ENCODE measurements at regions of chr10 and their contacts with region 1.

Region 1: GRCh38 chr10:26437637-26438461 is at the start of gene APBB1IP:
- DNase-seq: peak; percentile 94
- H3K4me3 ChIP-seq: peak within 1 kb of the TSS; percentile 93
- H3K27ac ChIP-seq: peak within 1 kb of the TSS; percentile 92
- H3K4me1 ChIP-seq: peaks cover 42% of the 10 kb centered on the region
- CTCF ChIP-seq: no peak
- total RNA-seq, gene APBB1IP: 58.1 and 65.8 TPM in 2 replicates

Region 2: DNA sequence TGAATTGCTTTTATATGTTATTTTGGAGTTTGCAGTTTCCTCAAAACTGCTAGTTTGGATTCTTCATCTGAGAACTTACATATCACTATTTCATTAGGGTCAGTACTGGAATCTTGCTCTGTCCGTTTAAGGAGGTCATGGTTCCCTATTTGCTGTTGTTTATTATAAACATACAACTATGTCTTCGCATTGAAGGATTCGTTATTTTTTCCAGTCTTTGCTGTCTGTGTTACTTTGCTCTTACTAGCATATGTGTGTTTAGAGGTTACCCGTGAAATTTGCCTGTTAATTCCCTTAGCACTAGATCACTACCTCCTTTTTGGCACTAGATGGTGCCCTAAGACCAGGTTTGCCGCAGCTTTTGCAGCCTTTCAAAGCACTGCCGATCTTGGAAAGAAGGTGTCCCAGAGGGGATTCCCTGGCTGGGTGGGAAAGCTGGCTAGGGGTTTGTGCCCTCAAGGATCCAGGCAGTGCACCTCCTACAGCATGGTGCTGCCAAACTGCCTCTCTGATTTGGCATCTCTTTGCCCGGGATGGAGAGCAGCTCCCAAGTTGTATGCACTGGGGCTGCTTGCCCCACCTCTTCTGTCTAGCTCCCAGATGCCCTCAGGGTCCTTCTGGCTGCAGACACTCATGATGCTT is 102.8 kb before region 1 on chr10:
- CTCF ChIA-PET with region 1: no interaction called
- POLR2A ChIA-PET with region 1: interaction called, 3 read pairs
- intact Hi-C with region 1: loop called (anchors 1 kb)
- DNase-seq: peak; percentile 90
- H3K4me3 ChIP-seq: peak overlapping the region; percentile 54
- H3K27ac ChIP-seq: peak overlapping the region; percentile 16
- H3K4me1 ChIP-seq: peaks cover 12% of the 10 kb centered on the region
- CTCF ChIP-seq: peak; percentile 99

Region 3: GRCh38 chr10:26448706-26449435 is 11.0 kb after region 1 on chr10:
- CTCF ChIA-PET with region 1: no interaction called
- POLR2A ChIA-PET with region 1: interaction called, 9 read pairs
- intact Hi-C with region 1: loop called (anchors 1 kb)
- DNase-seq: peak; percentile 97
- H3K4me3 ChIP-seq: peak overlapping the region; percentile 61
- H3K27ac ChIP-seq: peak overlapping the region; percentile 95
- H3K4me1 ChIP-seq: peaks cover 92% of the 10 kb centered on the region
- CTCF ChIP-seq: peak; percentile 59

Region 4: GRCh38 chr10:26481914-26482550 is 44.2 kb after region 1 on chr10:
- CTCF ChIA-PET with region 1: no interaction called
- POLR2A ChIA-PET with region 1: interaction called, 10 read pairs
- intact Hi-C with region 1: loop called (anchors 2 kb)
- DNase-seq: peak; percentile 86
- H3K4me3 ChIP-seq: peak overlapping the region; percentile 58
- H3K27ac ChIP-seq: peak overlapping the region; percentile 96
- H3K4me1 ChIP-seq: peaks cover 85% of the 10 kb centered on the region
- CTCF ChIP-seq: no peak

Region 5: GRCh38 chr10:26860443-26861204 is 422.8 kb after region 1 on chr10 and contains the start of gene ABI1:
- CTCF ChIA-PET with region 1: no interaction called
- POLR2A ChIA-PET with region 1: no interaction called
- intact Hi-C with region 1: loop called (anchors 5 kb)
- DNase-seq: peak; percentile 99
- H3K4me3 ChIP-seq: peak within 1 kb of the TSS; percentile 99
- H3K27ac ChIP-seq: peak within 1 kb of the TSS; percentile 95
- H3K4me1 ChIP-seq: peaks cover 29% of the 10 kb centered on the region
- CTCF ChIP-seq: 0 out of 2 replicates have a peak, but pooled peaks have one; percentile 23
- total RNA-seq, gene ABI1: 57.4 and 62.4 TPM in 2 replicates